ENCODE measurements at regions of chr22 and their contacts with region 1.

Region 1: GRCh38 chr22:30423982-30424963 is 1.3 kb upstream of the MTFP1 start:
- DNase-seq: peak; percentile 98 to 100
- H3K4me3 ChIP-seq: peak overlapping the region; percentile 57 to 86
- H3K27ac ChIP-seq: peak overlapping the region; percentile 98
- H3K4me1 ChIP-seq: peaks cover 14 to 35% of the 10 kb centered on the region in 2 donors
- H3K27me3 ChIP-seq: no peaks in the 10 kb centered on the region
- CTCF ChIP-seq: no peak

Region 2: DNA sequence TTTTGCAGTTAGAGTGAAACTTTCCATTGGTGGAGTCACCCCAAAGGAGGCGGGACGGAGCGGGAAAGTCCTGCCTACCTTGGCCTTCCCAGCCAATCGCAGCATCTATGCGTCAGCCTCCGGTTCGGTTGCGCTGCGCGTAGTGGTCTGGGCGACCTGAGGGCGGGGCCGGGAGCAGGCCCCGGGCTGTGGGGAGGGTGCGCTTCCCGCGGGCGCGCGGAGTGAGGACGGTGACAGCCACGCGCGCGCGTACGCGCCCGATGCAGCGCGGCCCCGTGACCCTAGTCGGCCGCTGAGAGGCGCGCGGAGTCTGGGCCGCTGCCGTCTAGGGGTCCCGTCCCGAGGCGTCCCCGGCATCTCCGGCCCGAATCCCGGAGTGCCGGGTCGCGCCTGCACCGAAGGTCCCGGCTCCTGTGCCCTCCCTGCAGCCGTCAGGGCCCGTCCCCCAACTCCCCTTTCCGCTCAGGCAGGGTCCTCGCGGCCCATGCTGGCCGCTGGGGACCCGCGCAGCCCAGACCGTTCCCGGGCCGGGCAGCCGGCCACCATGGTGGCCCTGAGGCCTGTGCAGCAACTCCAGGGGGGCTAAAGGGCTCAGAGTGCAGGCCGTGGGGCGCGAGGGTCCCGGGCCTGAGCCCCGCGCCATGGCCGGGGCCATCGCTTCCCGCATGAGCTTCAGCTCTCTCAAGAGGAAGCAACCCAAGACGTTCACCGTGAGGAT is 820.8 kb before region 1 on chr22 and contains the start of gene NF2:
- intact Hi-C with region 1: loop called (anchors 10 kb)
- DNase-seq: peak; percentile 97 to 99
- H3K4me3 ChIP-seq: peak within 1 kb of the TSS; percentile 78 to 92
- H3K27ac ChIP-seq: peak within 1 kb of the TSS; percentile 83 to 92
- H3K4me1 ChIP-seq: peaks cover 0 to 10% of the 10 kb centered on the region in 2 donors
- H3K27me3 ChIP-seq: no peaks in the 10 kb centered on the region
- CTCF ChIP-seq: no peak
- total RNA-seq, gene NF2: 37.3 TPM

Region 3: DNA sequence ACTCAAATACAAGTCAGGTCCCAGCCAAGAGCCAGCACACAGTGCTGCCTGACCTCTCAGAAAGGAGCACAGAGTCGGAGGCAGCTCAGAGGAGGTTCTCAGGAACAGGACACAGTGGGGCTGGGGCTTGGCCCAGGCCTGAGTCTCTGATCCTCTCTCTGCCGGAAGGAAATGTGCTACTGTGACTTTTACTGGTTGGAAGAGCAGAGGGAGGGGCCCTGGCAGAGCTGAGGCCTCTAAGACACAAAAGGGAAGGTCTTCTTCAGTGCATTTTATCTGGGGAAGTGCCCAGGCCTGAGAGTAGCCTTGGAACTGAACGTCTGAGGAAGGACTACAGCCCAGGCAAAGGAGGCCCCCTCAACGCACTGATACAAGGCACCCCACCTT is 118.8 kb before region 1 on chr22:
- intact Hi-C with region 1: loop called (anchors 5 kb)
- DNase-seq: peak in 1 of 2 donors; percentile 83
- H3K4me3 ChIP-seq: peak overlapping the region; percentile 25 to 29
- H3K27ac ChIP-seq: peak overlapping the region; percentile 86
- H3K4me1 ChIP-seq: peaks cover 50 to 93% of the 10 kb centered on the region in 2 donors
- H3K27me3 ChIP-seq: no peaks in the 10 kb centered on the region
- CTCF ChIP-seq: no peak

Region 4: GRCh38 chr22:30386960-30387827 is 37.1 kb before region 1 on chr22 and contains the start of gene RNF215:
- intact Hi-C with region 1: loop called (anchors 2 kb)
- DNase-seq: peak in 1 of 2 donors; percentile 88
- H3K4me3 ChIP-seq: peak within 1 kb of the TSS; percentile 73 to 86
- H3K27ac ChIP-seq: peak within 1 kb of the TSS; percentile 59 to 70
- H3K4me1 ChIP-seq: peaks cover 8 to 11% of the 10 kb centered on the region in 2 donors
- H3K27me3 ChIP-seq: no peaks in the 10 kb centered on the region
- CTCF ChIP-seq: peak; percentile 75 to 95 (median 85)
- total RNA-seq, gene RNF215: 6.7 TPM

Region 5: GRCh38 chr22:30591588-30592359 is 167.5 kb after region 1 on chr22 and contains the start of gene PES1:
- intact Hi-C with region 1: loop called (anchors 2 kb)
- DNase-seq: peak; percentile 81 to 98
- H3K4me3 ChIP-seq: peak within 1 kb of the TSS; percentile 59 to 85
- H3K27ac ChIP-seq: peak within 1 kb of the TSS; percentile 73 to 81
- H3K4me1 ChIP-seq: peaks cover 6 to 15% of the 10 kb centered on the region in 2 donors
- H3K27me3 ChIP-seq: no peaks in the 10 kb centered on the region
- CTCF ChIP-seq: no peak
- total RNA-seq, gene PES1: 24.7 TPM

Region 6: DNA sequence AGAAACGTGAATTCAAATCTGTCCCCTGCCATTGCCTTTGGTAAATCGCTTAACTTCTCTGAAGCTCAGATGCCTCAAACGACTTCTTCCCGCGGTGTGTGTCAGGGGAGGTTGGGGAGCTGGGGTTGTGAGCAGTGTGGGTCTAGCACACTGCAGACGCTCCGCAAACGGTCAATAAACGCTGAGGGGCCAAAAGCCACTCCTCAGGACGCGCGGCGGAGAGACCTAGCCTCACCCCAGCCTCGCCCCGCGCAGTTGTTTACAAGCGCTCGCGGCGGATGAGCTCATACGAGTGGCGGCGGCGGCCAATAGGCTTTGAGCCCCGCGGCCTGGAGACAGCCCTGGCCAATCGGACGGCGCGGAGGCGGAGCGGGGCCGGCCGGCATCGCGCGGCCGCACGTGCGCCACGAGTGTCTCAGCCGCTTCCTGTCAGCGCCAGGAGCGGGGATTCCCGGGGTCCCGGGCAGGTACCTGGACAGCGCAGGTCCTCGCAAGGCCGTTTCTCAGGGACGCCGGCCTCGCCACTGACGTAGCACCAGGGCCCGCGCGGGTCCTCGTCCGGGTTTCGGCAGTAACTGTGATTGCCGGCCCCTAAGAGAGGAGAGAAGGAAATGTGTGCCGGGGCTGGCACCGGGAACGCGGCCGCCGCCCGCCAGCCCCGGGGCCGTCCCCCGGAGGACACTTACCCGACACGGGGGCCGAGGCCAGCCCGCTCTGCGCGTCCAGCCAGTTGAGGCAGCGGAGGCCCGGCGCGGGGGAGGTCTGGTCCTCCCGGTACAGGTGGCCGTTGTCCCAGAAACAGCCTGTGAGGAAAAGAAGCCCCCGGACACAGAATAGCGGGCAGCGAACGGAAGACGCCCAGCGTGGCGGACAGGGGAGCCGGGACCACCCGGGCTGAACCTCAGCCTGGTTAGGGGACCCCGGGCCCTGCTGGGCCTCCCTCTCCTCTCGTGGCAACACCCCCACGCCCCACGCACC is 866.5 kb after region 1 on chr22:
- intact Hi-C with region 1: loop called (anchors 5 kb)
- DNase-seq: peak; percentile 89 to 98
- H3K4me3 ChIP-seq: peak overlapping the region; percentile 84 to 86
- H3K27ac ChIP-seq: peak overlapping the region; percentile 98 to 99
- H3K4me1 ChIP-seq: peaks cover 12 to 34% of the 10 kb centered on the region in 2 donors
- H3K27me3 ChIP-seq: no peaks in the 10 kb centered on the region
- CTCF ChIP-seq: no peak

Measured in ascending aorta (tissue), 2 donors.